CD4-positive, alpha-beta memory T cell (primary cell): ENCODE measurements at regions of chr7 and their contacts with region 1.

Region 1: DNA sequence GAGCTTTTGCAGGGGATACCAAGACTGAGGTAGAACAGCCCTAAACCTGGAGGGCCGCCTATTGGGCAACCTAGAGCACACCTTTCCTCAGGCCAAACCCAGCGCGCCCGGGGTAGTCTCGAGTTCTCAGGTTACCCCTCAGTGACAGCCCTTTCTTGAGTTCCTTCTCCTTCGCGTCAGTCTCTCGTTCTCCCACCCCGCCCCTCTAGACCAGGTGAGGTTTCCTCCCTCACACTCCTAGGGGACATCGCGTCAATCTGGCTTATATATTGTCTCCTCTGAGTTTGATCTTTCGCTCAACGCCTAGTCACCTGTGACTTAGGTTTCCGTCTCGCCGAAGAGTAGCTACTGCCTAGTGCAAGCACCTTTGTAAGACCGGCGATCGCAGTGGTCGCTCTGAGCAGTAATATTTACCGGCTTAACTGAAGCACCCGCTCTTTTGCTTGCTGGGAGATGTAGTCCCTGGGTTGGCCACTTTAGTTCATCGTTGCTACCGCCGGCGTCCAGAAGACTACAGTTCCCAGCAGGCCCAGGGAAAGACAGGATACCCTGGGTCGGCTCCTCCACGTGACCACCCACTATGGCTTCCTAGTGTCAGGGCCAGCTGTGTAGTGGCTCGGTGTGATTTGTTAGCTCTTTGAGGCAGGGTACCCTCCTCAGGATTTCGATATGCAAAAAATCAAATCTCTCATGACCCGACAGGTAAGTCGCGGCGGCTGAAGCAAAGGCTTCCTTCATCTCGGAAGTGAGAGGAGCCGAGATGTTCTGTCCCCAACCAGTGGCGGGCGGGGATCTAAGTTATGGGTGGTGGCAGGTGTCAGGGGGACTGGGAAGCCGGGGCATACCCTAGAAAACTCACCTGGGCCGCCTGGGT is at the start of gene VPS50:
- DNase-seq: peak; percentile 95 to 98 (median 97)
- H3K4me3 ChIP-seq: peak within 1 kb of the TSS; percentile 66 to 99
- H3K4me3 Mint-ChIP-seq: peak within 1 kb of the TSS; percentile 91 to 97 (median 95)
- H3K27ac ChIP-seq: peak within 1 kb of the TSS; percentile 86
- H3K27ac Mint-ChIP-seq: peak within 1 kb of the TSS; percentile 85 to 100 (median 98)
- H3K4me1 ChIP-seq: peaks cover 31% of the 10 kb centered on the region
- H3K4me1 Mint-ChIP-seq: peaks cover 9 to 20% (median 14%) of the 10 kb centered on the region in 4 donors
- H3K27me3 ChIP-seq: no peaks in the 10 kb centered on the region
- H3K27me3 Mint-ChIP-seq: no peaks in the 10 kb centered on the region
- total RNA-seq, gene VPS50: 35.1 to 45.8 TPM

Region 2: DNA sequence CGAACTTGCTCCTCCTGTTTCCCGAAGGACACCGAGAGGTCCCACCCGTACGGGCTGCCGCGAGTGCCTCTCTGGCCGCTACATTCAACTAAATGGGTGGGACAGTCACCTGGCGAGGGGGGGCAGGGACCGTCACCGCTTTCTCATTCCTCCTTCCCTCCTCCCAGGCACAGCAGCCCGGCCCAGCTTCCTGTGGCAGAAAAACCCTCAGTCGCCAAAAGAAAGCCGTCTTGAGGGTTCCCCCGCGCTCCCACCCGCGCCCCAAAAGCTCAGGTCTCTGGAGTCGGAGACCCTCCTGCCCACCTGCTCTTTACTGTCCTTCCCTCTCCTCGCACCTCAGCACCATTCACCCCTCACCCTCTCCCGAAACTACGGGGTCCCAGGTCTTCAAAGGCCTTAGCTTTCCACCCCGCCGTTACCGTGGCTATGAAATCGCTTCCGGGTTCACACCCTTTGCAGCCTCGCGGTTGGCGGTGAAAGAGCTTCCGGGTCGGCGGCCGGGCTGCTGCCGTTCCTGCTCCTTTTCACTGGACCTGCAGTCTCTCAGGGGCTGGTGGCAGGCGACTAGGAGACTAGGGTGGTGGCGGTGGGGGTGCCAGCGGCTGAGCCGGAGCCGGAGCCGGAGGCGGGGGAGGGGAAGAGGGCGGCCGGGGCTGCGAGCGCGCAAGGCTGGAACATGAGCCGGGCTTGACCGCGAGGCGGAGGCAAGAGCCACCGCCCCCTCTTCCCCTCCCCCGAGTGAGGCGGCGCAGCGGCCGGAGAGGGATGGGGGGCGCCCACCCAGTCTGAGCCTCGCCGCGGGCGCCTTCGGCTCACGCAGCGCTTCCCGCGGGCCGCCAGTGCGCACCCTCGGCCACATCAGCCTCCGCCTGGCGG is 986.3 kb before region 1 on chr7 and contains the starts of genes ANKIB1 and KRIT1:
- CTCF ChIA-PET with region 1: no interaction called
- POLR2A ChIA-PET with region 1: no interaction called
- intact Hi-C with region 1: loop called (anchors 2 kb)
- DNase-seq: peak; percentile 86 to 91 (median 88)
- H3K4me3 ChIP-seq: peak within 1 kb of the TSS; percentile 91 to 98
- H3K4me3 Mint-ChIP-seq: peak within 1 kb of the TSS; percentile 94 to 100 (median 99)
- H3K27ac ChIP-seq: peak within 1 kb of the TSS; percentile 97
- H3K27ac Mint-ChIP-seq: peak within 1 kb of the TSS; percentile 98 to 100 (median 100)
- H3K4me1 ChIP-seq: peaks cover 43% of the 10 kb centered on the region
- H3K4me1 Mint-ChIP-seq: peaks cover 26 to 49% (median 37%) of the 10 kb centered on the region in 4 donors
- H3K27me3 ChIP-seq: no peaks in the 10 kb centered on the region
- H3K27me3 Mint-ChIP-seq: no peaks in the 10 kb centered on the region
- total RNA-seq, gene ANKIB1: 77.7 to 78.5 TPM
- total RNA-seq, gene KRIT1: 66.0 to 80.7 TPM

Region 3: DNA sequence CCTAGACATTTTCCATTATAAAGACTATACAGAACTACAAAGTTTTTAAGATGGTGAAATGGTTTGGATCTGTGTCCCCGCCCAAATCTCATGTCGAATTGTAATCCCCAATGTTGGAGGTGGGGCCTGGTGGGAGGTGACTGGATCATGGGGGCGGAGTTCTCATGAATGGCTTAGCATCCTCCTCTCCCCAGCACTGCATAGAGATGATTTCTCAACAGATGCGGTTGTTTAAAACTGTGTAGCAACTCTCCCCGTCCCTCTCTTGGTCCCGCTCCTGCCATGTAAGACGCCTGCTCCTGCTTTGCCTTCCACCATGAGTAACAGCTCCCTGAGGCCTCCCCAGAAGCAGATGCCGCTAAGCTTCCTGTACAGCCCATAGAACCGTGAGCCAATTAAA is 643.5 kb before region 1 on chr7:
- CTCF ChIA-PET with region 1: no interaction called
- POLR2A ChIA-PET with region 1: interaction called, 5 read pairs
- intact Hi-C with region 1: loop called (anchors 2 kb)
- DNase-seq: peak in 1 of 5 donors; percentile 4
- H3K4me3 ChIP-seq: peak overlapping the region; percentile 82 to 98
- H3K4me3 Mint-ChIP-seq: peak overlapping the region; percentile 87 to 98 (median 96)
- H3K27ac ChIP-seq: peak overlapping the region; percentile 91
- H3K27ac Mint-ChIP-seq: peak overlapping the region; percentile 19 to 97 (median 80)
- H3K4me1 ChIP-seq: peaks cover 58% of the 10 kb centered on the region
- H3K4me1 Mint-ChIP-seq: peaks cover 41 to 72% (median 52%) of the 10 kb centered on the region in 4 donors
- H3K27me3 ChIP-seq: no peaks in the 10 kb centered on the region
- H3K27me3 Mint-ChIP-seq: no peaks in the 10 kb centered on the region

Region 4: DNA sequence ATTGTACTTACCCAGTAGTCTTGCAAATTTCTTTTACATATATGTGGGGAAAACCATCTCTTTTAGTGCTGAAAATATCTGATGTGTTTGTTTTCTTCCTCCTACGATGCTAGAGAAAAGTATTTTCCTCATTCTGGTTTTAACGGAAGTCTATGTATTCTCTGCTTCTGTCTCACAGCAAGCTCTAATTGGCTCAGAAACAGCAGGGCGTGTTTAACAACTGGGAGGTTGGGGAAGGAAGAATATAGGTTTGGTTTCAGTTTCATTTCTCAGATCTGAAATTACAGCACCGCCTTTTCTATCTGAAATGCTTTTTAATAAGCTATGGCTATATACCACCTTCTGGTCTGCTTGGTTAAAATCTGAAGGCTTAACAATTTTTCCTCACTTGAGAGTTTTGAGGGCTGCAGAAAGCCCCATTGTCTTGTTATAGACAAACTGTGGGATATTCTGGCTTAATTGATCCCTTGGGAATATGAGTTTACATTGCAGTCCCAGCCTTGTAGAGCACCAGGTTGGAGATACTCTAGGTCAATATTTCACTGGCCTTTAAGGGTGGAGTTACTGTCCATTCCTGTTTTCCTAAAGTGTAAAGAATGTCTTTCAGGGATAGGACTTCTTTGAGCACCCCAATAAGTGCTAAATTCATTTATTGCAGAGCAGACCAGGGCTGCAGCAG is 114.0 kb before region 1 on chr7 and contains the start of gene SAMD9:
- CTCF ChIA-PET with region 1: interaction called, 19 read pairs
- POLR2A ChIA-PET with region 1: interaction called, 24 read pairs
- intact Hi-C with region 1: loop called (anchors 1 kb)
- DNase-seq: peak; percentile 71 to 89 (median 82)
- H3K4me3 ChIP-seq: peak within 1 kb of the TSS; percentile 65 to 96
- H3K4me3 Mint-ChIP-seq: peak within 1 kb of the TSS; percentile 88 to 94 (median 91)
- H3K27ac ChIP-seq: peak within 1 kb of the TSS; percentile 75
- H3K27ac Mint-ChIP-seq: peak within 1 kb of the TSS; percentile 80 to 96 (median 95)
- H3K4me1 ChIP-seq: peaks cover 37% of the 10 kb centered on the region
- H3K4me1 Mint-ChIP-seq: peaks cover 33 to 60% (median 49%) of the 10 kb centered on the region in 4 donors
- H3K27me3 ChIP-seq: no peaks in the 10 kb centered on the region
- H3K27me3 Mint-ChIP-seq: no peaks in the 10 kb centered on the region
- total RNA-seq, gene SAMD9: 55.1 to 56.6 TPM

Region 5: DNA sequence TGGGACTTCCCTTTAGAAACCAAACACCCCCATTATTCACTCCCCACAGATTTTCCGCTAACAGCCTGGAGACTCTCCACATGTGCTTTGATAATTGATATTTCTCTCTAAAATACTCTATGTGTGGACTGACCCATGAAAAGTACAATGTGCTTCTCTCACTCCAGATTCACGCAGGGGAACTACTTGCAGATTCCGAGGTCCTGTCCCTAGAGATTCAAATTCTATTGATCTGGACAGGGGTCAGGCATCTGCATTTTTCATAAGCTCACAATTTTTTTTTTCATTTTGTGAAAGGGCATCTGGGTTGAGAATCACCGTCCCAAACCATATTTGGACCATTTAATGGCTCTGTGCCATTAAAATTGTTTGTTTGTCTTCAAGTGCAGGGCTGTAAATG is 243.8 kb after region 1 on chr7:
- CTCF ChIA-PET with region 1: no interaction called
- POLR2A ChIA-PET with region 1: no interaction called
- intact Hi-C with region 1: no loop called
- DNase-seq: no peak
- H3K4me3 ChIP-seq: no peak overlapping the region
- H3K4me3 Mint-ChIP-seq: no peak overlapping the region
- H3K27ac ChIP-seq: no peak overlapping the region
- H3K27ac Mint-ChIP-seq: no peak overlapping the region
- H3K4me1 ChIP-seq: no peaks in the 10 kb centered on the region
- H3K4me1 Mint-ChIP-seq: no peaks in the 10 kb centered on the region
- H3K27me3 ChIP-seq: no peaks in the 10 kb centered on the region
- H3K27me3 Mint-ChIP-seq: no peaks in the 10 kb centered on the region

Region 6: GRCh38 chr7:94004024-94004951 is 772.3 kb after region 1 on chr7 and contains the start of gene BET1:
- CTCF ChIA-PET with region 1: no interaction called
- POLR2A ChIA-PET with region 1: no interaction called
- intact Hi-C with region 1: loop called (anchors 1 kb)
- DNase-seq: peak; percentile 91 to 96 (median 92)
- H3K4me3 ChIP-seq: peak within 1 kb of the TSS; percentile 95 to 96
- H3K4me3 Mint-ChIP-seq: peak within 1 kb of the TSS; percentile 97 to 99 (median 99)
- H3K27ac ChIP-seq: peak within 1 kb of the TSS; percentile 90
- H3K27ac Mint-ChIP-seq: peak within 1 kb of the TSS; percentile 96 to 100 (median 99)
- H3K4me1 ChIP-seq: peaks cover 22% of the 10 kb centered on the region
- H3K4me1 Mint-ChIP-seq: peaks cover 25 to 51% (median 36%) of the 10 kb centered on the region in 4 donors
- H3K27me3 ChIP-seq: no peaks in the 10 kb centered on the region
- H3K27me3 Mint-ChIP-seq: peaks cover 2 to 5% of the 10 kb centered on the region in 2 donors
- total RNA-seq, gene BET1: 40.8 to 45.7 TPM